CD14-positive monocyte (primary cell): ENCODE measurements at regions of chr13 and their contacts with region 1.

Region 1: GRCh38 chr13:59391696-59392095 is 772.0 kb downstream of the DIAPH3 start:
- DNase-seq: peak; percentile 27 to 56 (median 51)
- H3K4me3 ChIP-seq: no peak overlapping the region
- H3K4me3 Mint-ChIP-seq: no peak overlapping the region
- H3K27ac ChIP-seq: no peak overlapping the region
- H3K27ac Mint-ChIP-seq: no peak overlapping the region
- H3K4me1 ChIP-seq: peaks cover 0 to 2% of the 10 kb centered on the region in 2 donors
- H3K4me1 Mint-ChIP-seq: no peaks in the 10 kb centered on the region
- H3K27me3 ChIP-seq: no peaks in the 10 kb centered on the region
- H3K27me3 Mint-ChIP-seq: no peaks in the 10 kb centered on the region
- CTCF ChIP-seq: peak; percentile 78

Region 2: DNA sequence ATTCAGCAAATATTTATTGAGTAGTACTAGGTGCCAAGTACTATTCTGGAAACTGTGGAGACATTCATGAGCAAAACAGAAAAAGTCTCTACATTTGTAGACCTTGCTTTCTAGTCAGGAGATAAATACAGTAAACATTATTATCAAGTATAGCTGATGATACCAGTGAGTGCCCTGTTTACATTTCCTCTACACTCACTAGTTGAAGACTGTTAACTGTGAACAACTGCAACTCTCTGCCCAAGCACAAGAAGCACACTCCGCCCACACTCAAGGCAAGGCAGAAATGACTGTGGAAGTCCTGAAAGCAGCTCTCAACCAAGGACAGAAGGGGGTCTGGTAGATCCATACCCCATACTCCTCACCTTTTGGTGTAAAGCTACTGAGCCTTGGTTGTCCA is 65.0 kb before region 1 on chr13:
- intact Hi-C with region 1: no loop called
- DNase-seq: no peak
- H3K4me3 ChIP-seq: no peak overlapping the region
- H3K4me3 Mint-ChIP-seq: no peak overlapping the region
- H3K27ac ChIP-seq: no peak overlapping the region
- H3K27ac Mint-ChIP-seq: no peak overlapping the region
- H3K4me1 ChIP-seq: no peaks in the 10 kb centered on the region
- H3K4me1 Mint-ChIP-seq: no peaks in the 10 kb centered on the region
- H3K27me3 ChIP-seq: no peaks in the 10 kb centered on the region
- H3K27me3 Mint-ChIP-seq: peaks cover 0 to 3% (median 0%) of the 10 kb centered on the region in 3 donors
- CTCF ChIP-seq: no peak

Region 3: GRCh38 chr13:59677966-59678814 is 286.5 kb after region 1 on chr13:
- intact Hi-C with region 1: loop called in 1 of 2 experiments (anchors 10 kb)
- DNase-seq: peak in 2 of 3 donors; percentile 10 to 29
- H3K4me3 ChIP-seq: no peak overlapping the region
- H3K4me3 Mint-ChIP-seq: no peak overlapping the region
- H3K27ac ChIP-seq: no peak overlapping the region
- H3K27ac Mint-ChIP-seq: no peak overlapping the region
- H3K4me1 ChIP-seq: no peaks in the 10 kb centered on the region
- H3K4me1 Mint-ChIP-seq: peaks cover 8% of the 10 kb centered on the region
- H3K27me3 ChIP-seq: no peaks in the 10 kb centered on the region
- H3K27me3 Mint-ChIP-seq: peaks cover 0 to 3% (median 0%) of the 10 kb centered on the region in 3 donors
- CTCF ChIP-seq: peak; percentile 70

Region 4: DNA sequence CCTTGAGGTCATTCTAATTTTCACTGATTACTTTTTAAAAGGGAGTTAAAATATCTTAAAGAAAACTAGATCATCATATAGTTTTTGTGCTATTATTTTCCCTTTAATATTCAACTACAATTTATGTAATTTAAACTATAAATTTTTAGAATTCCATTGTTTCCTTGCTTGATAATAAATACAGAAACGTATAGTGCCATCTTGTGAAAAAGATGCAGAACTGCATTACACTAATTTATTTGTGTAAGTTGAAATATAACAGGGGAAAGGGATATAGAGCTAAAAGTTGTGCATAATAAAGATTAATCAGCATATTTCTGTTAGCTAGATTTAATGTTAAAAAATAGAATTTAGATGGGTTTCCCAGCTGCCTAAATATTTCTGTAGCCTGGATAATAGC is 943.8 kb after region 1 on chr13:
- intact Hi-C with region 1: loop called in 1 of 2 experiments (anchors 10 kb)
- DNase-seq: no peak
- H3K4me3 ChIP-seq: no peak overlapping the region
- H3K4me3 Mint-ChIP-seq: no peak overlapping the region
- H3K27ac ChIP-seq: no peak overlapping the region
- H3K27ac Mint-ChIP-seq: no peak overlapping the region
- H3K4me1 ChIP-seq: no peaks in the 10 kb centered on the region
- H3K4me1 Mint-ChIP-seq: no peaks in the 10 kb centered on the region
- H3K27me3 ChIP-seq: no peaks in the 10 kb centered on the region
- H3K27me3 Mint-ChIP-seq: peaks cover 5 to 12% (median 6%) of the 10 kb centered on the region in 3 donors
- CTCF ChIP-seq: peak; percentile 70

Region 5: GRCh38 chr13:60772726-60773125 is 1381.0 kb after region 1 on chr13:
- intact Hi-C with region 1: no loop called
- DNase-seq: no peak
- H3K4me3 ChIP-seq: no peak overlapping the region
- H3K4me3 Mint-ChIP-seq: no peak overlapping the region
- H3K27ac ChIP-seq: no peak overlapping the region
- H3K27ac Mint-ChIP-seq: no peak overlapping the region
- H3K4me1 ChIP-seq: no peaks in the 10 kb centered on the region
- H3K4me1 Mint-ChIP-seq: no peaks in the 10 kb centered on the region
- H3K27me3 ChIP-seq: no peaks in the 10 kb centered on the region
- H3K27me3 Mint-ChIP-seq: peaks cover 0 to 1% (median 1%) of the 10 kb centered on the region in 3 donors
- CTCF ChIP-seq: no peak